ENCODE measurements at regions of chr21 and their contacts with region 1.

Region 1: GRCh38 chr21:38434913-38435533 is 63.3 kb downstream of the ERG start:
- DNase-seq: no peak

Region 2: DNA sequence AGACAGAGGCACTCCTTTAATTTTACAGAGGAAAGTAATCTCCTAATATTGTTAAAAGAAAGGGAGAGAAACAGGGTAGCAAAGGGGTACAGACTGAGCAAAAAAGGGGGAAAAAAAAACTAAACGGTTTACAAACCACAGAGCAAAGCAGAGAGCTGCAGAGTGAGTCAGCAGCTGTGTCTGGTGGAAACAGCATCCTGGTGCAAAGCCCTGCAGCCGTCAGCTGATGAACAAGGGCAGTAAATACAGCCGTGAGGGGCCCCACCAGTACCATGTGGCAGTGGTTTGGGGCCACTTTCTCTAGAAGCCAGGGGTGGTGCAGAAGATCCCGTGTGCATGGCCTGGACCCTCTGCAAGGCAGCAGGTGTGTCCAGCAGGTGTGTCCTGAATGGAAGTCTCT is 48.1 kb before region 1 on chr21:
- intact Hi-C with region 1: loop called in 1 of 2 experiments (anchors 1 kb)
- DNase-seq: no peak

Region 3: GRCh38 chr21:38729754-38730379 is 294.8 kb after region 1 on chr21:
- intact Hi-C with region 1: no loop called
- DNase-seq: no peak